AG04449 (cell line): ENCODE measurements at regions of chr7 and their contacts with region 1.

Region 1: DNA sequence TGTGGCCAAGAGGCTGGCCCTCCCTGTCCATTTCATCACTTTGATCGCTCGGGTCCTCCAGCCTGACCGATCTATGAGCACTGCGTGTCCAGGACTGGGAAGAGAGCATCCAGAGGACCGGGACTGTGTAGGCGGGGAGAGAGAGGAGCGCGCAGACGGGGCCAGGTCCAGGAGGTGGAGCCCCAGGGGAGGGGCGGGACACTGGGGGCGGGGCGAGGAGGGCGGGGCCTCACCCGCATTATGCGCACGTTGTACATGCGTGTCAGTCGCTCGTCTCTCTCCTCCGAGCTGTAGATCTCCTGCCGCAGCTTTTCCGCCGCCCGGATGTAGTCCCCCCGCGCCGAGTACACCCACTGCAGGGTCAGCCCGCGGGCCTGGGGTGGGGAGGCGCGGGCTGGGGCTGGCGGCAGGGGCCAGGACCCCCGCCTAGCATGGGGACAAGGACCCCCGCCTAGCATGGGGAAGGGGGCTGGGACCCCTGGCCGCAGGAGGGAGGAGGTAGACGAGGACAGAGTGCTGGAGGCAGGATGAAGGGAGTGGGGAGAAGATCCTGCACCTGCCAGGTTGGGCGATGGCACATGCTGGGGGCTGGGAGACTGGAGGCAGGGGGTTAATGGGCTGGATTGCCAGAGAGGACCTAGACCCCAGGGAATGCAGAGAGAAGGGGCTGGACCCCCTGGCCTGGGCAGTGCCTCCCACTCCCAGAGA is 14.3 kb downstream of the MOSPD3 start:
- DNase-seq: no peak
- H3K4me3 ChIP-seq: peak overlapping the region; percentile 53
- CTCF ChIP-seq: no peak

Region 2: DNA sequence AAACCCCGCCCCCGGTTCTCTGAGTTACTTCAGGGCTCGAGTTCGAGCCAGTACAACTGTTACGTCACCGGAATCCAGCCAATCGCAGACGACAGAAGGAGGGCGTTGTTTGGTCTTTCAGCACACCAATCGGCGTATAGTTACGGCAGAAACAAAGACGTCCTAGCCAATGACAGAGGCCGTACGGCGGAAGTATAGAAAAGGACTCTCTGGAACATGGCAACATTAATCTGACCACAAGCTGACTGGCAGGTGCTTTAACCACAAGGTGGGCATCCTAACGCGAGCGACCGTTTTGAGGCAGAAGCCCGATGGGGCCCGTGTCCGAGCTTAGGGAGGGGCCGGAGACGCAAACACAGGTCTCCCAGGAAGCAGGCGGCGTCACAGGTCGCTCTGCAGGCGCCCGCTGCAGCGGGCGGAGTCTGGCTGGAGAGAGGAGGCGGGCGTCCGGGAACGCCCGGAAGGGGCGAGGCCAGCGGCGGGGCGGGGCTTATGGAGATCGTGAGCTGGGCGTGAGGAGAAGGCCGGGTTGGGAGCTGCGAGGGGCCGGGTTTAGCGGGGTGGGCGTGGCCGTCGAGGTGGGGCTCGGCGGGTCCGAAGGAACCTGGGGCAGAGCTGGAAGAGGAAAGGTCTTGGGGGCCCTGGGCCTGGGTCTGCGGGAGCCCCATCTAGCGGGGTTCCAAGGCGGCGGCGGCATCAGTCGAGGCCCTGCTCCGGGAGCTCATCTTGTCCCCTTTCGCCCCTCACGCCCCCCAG is 14.5 kb before region 1 on chr7 and contains the start of gene MOSPD3:
- CTCF ChIA-PET with region 1: interaction called, 10 read pairs
- POLR2A ChIA-PET with region 1: no interaction called
- DNase-seq: peak; percentile 94
- H3K4me3 ChIP-seq: peak within 1 kb of the TSS; percentile 68
- CTCF ChIP-seq: no peak